ENCODE measurements at regions of chr7 and their contacts with region 1.

Region 1: DNA sequence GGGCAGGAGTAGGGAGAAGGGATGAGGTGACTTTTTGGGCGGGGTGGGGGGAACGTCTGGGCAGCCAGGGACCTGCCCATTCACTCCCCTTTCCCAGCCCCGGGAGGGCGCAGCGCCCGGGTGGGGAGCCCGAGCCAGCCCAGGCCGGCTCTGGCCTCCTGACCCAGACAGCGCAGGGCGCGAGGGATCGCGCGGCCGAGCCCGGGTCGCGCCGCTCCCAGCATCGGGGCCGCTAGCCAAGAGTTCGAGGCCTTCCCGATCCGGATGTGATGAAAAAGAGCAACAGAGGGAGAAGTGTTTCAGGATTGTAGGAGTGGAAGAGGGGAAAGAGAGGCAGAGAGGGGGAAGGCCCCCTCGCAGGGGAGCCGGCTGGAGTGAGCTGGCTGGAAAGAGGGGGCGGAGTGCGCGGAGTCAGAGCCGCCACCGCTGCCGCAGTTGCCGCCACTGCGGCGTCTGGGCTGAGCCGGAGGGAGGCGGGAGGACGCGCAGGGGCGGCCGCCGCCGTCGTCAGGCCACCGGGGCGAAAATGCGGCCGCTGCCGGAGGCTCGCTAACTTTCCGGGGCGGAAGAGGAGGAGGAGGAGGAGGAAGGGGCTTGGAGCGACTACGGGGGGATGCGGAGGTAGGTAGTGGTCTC is at the start of gene MDFIC:
- DNase-seq: peak; percentile 11 to 78 (median 53)
- ATAC-seq: peak; percentile 54
- H3K4me3 ChIP-seq: peak within 1 kb of the TSS; percentile 65 to 91
- H3K4me3 Mint-ChIP-seq: peak within 1 kb of the TSS; percentile 93
- H3K27ac ChIP-seq: peak within 1 kb of the TSS; percentile 51 to 88
- H3K27ac Mint-ChIP-seq: peak within 1 kb of the TSS; percentile 90
- H3K4me1 ChIP-seq: peaks cover 20% of the 10 kb centered on the region
- H3K4me1 Mint-ChIP-seq: peaks cover 52% of the 10 kb centered on the region
- H3K27me3 ChIP-seq: no peaks in the 10 kb centered on the region
- H3K27me3 Mint-ChIP-seq: no peaks in the 10 kb centered on the region
- CTCF ChIP-seq: no peak
- total RNA-seq, gene MDFIC: 16.8 to 17.2 TPM

Region 2: DNA sequence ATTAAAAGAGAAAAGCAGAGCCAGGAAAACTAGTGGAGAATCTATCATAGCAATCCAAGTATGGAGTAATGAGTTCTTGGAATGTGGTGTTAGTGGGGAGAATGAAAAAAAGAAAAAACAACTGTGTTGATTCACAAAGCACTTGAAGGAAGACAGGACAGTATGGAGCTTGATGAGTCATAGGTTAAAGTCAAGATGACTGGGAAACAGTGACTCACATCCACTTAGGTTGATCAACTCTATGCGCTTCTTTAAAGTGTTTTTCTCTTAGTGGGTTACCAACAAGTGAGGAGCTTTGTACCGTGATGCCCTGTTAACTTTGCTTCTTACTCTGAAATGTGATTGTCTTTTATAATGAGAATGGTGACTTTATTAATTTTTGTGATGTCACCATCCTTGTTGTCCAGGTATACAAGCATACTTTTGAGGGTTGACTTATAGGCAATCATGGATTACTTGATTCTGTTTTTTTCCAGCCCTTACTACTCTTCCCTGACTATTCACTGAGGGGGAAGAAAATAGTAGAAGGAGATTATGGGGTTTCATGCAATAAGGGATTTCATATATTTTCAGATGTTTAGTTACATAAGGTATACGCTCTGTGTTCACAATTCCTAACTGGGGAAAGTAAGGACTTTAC is 32.4 kb before region 1 on chr7:
- CTCF ChIA-PET with region 1: no interaction called
- POLR2A ChIA-PET with region 1: no interaction called
- intact Hi-C with region 1: loop called in 1 of 2 experiments (anchors 5 kb)
- DNase-seq: peak in 2 of 9 experiments; percentile 17 to 19
- ATAC-seq: peak; percentile 73
- H3K4me3 ChIP-seq: no peak overlapping the region
- H3K4me3 Mint-ChIP-seq: no peak overlapping the region
- H3K27ac ChIP-seq: no peak overlapping the region
- H3K27ac Mint-ChIP-seq: no peak overlapping the region
- H3K4me1 ChIP-seq: no peaks in the 10 kb centered on the region
- H3K4me1 Mint-ChIP-seq: peaks cover 6% of the 10 kb centered on the region
- H3K27me3 ChIP-seq: no peaks in the 10 kb centered on the region
- H3K27me3 Mint-ChIP-seq: no peaks in the 10 kb centered on the region
- CTCF ChIP-seq: no peak

Region 3: GRCh38 chr7:115015619-115016018 is 93.5 kb after region 1 on chr7:
- CTCF ChIA-PET with region 1: no interaction called
- POLR2A ChIA-PET with region 1: no interaction called
- intact Hi-C with region 1: loop called in 1 of 2 experiments (anchors 2 kb)
- DNase-seq: no peak
- ATAC-seq: no peak
- H3K4me3 ChIP-seq: no peak overlapping the region
- H3K4me3 Mint-ChIP-seq: no peak overlapping the region
- H3K27ac ChIP-seq: no peak overlapping the region
- H3K27ac Mint-ChIP-seq: no peak overlapping the region
- H3K4me1 ChIP-seq: peaks cover 9% of the 10 kb centered on the region
- H3K4me1 Mint-ChIP-seq: peaks cover 39% of the 10 kb centered on the region
- H3K27me3 ChIP-seq: no peaks in the 10 kb centered on the region
- H3K27me3 Mint-ChIP-seq: no peaks in the 10 kb centered on the region
- CTCF ChIP-seq: no peak

Region 4: DNA sequence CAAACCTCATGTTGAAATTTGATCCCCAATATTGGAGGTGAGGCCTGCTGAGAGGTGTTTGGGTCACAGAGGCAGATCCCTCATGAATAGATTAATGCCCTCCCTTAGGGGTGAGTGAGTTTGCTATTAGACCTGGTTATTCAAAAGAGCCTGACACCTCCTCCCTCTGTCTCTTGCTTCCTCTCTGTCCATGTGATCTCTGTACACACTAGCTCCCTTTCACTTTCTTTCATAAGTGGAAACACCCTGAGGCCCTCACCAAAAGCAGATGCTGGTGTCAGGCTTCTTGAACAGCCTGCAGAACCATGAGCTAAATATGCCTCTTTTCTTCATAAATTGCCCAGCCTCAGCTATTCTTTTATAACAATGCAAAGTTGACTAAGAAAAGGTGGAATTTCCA is 446.9 kb after region 1 on chr7:
- CTCF ChIA-PET with region 1: no interaction called
- POLR2A ChIA-PET with region 1: no interaction called
- intact Hi-C with region 1: no loop called
- DNase-seq: no peak
- ATAC-seq: no peak
- H3K4me3 ChIP-seq: no peak overlapping the region
- H3K4me3 Mint-ChIP-seq: no peak overlapping the region
- H3K27ac ChIP-seq: no peak overlapping the region
- H3K27ac Mint-ChIP-seq: no peak overlapping the region
- H3K4me1 ChIP-seq: no peaks in the 10 kb centered on the region
- H3K4me1 Mint-ChIP-seq: no peaks in the 10 kb centered on the region
- H3K27me3 ChIP-seq: no peaks in the 10 kb centered on the region
- H3K27me3 Mint-ChIP-seq: peaks cover 2% of the 10 kb centered on the region
- CTCF ChIP-seq: no peak

Region 5: DNA sequence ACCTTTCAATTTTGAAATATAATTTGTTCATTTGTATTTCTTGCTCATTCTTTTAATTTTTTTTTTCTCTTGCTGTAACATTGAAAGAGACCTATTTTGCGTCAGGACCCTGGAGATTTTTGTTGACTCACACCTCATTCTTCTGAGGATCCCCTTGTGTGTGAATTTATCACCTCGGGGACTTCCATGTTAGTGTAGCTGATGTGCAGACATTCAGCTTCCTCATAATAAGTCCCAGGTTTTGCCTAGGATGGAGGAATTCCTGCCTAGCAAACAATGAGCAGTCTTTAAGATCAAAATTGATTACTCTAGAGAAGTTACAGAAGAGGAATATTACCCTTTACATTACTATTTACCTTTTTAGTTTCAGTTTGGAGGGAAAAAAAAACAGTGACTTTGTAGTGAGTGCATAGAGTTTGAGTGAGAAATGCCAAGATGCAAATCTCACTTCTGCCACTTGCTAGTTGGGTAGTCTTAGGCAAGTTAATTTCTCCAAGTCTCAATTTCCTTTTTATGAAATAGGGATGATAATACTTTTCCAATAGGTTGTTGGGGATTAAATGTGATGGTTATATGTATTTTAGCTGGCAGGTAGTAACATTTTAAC is 1302.5 kb after region 1 on chr7:
- CTCF ChIA-PET with region 1: interaction called, 3 read pairs
- POLR2A ChIA-PET with region 1: no interaction called
- intact Hi-C with region 1: loop called (anchors 5 to 10 kb)
- DNase-seq: peak in 3 of 9 experiments; percentile 15 to 77 (median 60)
- ATAC-seq: peak; percentile 73
- H3K4me3 ChIP-seq: peak overlapping the region in 1 of 2 experiments; percentile 13
- H3K4me3 Mint-ChIP-seq: peak overlapping the region; percentile 69
- H3K27ac ChIP-seq: peak overlapping the region in 1 of 2 experiments; percentile 67
- H3K27ac Mint-ChIP-seq: peak overlapping the region; percentile 49
- H3K4me1 ChIP-seq: peaks cover 76% of the 10 kb centered on the region
- H3K4me1 Mint-ChIP-seq: peaks cover 87% of the 10 kb centered on the region
- H3K27me3 ChIP-seq: no peaks in the 10 kb centered on the region
- H3K27me3 Mint-ChIP-seq: no peaks in the 10 kb centered on the region
- CTCF ChIP-seq: no peak

Measured in CD8-positive, alpha-beta T cell (primary cell).